ENCODE measurements at regions of chr5 and their contacts with region 1.

Region 1: GRCh38 chr5:102591650-102592049 is 92.8 kb upstream of the SLCO6A1 start:
- DNase-seq: no peak
- H3K4me3 Mint-ChIP-seq: no peak overlapping the region
- H3K27ac Mint-ChIP-seq: peak overlapping the region; percentile 4
- H3K4me1 Mint-ChIP-seq: peaks cover 15% of the 10 kb centered on the region
- H3K27me3 Mint-ChIP-seq: peaks cover 7% of the 10 kb centered on the region

Region 2: DNA sequence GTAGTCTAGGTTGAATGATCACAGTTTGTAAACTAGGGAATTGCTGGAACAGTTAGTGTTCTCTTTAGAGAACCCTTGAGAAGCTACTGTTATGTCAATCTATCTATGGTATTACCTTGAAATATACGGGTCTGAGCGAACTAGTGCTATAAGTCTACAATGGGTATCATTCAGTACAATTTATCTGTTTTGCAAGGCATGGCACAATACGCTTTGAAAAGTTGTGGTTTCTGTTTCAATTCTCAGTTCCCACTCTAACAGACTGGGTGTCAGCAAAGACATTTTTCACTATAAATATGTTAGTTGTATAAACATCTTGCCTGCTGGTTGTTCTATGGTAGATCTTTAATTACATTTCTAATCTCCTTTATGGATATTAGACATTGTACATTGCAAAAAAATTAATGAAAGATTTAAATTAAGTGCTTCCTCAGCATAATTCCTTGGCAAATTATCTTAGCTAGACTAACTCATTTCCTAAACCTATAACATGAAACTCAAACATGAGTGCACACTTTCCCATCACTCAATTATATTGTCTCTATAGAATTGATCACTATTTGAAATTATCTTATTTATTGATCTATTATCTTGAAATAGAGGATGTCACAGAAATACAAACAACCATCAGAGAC is 68.0 kb before region 1 on chr5:
- intact Hi-C with region 1: no loop called
- DNase-seq: no peak
- H3K4me3 Mint-ChIP-seq: no peak overlapping the region
- H3K27ac Mint-ChIP-seq: no peak overlapping the region
- H3K4me1 Mint-ChIP-seq: peaks cover 4% of the 10 kb centered on the region
- H3K27me3 Mint-ChIP-seq: peaks cover 4% of the 10 kb centered on the region

Region 3: DNA sequence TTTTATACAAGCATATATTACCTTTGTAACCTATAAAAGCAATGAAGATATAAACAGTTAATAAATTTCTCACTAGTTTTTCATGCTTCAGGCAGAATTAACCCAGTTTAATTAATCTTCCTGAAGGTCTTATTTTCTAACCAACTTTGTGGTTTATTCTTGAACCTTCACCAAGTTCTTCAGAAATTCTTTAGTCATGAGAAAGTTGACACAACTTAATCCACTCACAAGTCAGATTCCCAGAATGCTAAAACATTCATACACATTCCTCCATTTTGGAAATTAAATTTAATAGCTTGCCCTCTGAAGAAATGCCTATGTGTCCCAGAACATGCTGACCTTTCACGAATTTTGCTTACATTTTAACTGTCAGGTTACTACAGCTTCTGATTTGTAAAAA is 58.1 kb after region 1 on chr5:
- intact Hi-C with region 1: no loop called
- DNase-seq: no peak
- H3K4me3 Mint-ChIP-seq: no peak overlapping the region
- H3K27ac Mint-ChIP-seq: no peak overlapping the region
- H3K4me1 Mint-ChIP-seq: no peaks in the 10 kb centered on the region
- H3K27me3 Mint-ChIP-seq: peaks cover 11% of the 10 kb centered on the region

Region 4: GRCh38 chr5:102762095-102762534 is 170.5 kb after region 1 on chr5:
- intact Hi-C with region 1: loop called (anchors 2 kb)
- DNase-seq: no peak
- H3K4me3 Mint-ChIP-seq: peak overlapping the region; percentile 58
- H3K27ac Mint-ChIP-seq: peak overlapping the region; percentile 82
- H3K4me1 Mint-ChIP-seq: peaks cover 69% of the 10 kb centered on the region
- H3K27me3 Mint-ChIP-seq: no peaks in the 10 kb centered on the region

Region 5: GRCh38 chr5:103041071-103041676 is 449.5 kb after region 1 on chr5:
- intact Hi-C with region 1: loop called (anchors 5 kb)
- DNase-seq: no peak
- H3K4me3 Mint-ChIP-seq: no peak overlapping the region
- H3K27ac Mint-ChIP-seq: no peak overlapping the region
- H3K4me1 Mint-ChIP-seq: no peaks in the 10 kb centered on the region
- H3K27me3 Mint-ChIP-seq: peaks cover 17% of the 10 kb centered on the region